Activated CD4-positive, alpha-beta memory T cell treated with anti-CD3 and anti-CD28 coated beads for 36 hours (primary cell): ENCODE measurements at regions of chr1 and their contacts with region 1.

Region 1: DNA sequence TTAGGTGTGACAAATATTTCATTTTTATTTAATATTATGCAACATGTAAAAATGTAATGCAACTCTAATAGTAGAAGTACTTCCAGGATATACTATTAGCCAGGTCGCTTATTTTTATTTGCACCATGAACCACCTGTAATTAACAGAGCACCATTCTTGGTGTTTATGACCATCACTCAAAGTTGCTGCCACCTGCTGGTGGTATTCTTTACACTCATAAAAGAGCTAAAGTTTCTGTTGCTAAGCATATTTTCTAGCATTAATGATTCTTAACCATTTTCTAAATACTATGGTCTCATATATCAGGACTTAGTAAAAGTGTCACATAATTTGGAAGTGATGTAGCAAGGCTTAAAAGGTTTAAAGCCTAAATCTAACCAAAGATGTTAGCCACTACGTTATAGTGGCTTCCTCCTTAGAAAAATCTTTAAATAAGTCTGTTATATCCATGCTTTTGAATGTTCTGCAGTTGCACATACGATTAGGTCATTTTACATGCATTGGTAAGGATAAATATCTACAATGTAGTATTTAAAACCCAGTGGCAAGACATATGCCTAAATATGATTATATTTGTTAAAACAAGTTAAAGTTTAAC is 244.5 kb downstream of the NEGR1 start:
- DNase-seq: no peak
- H3K4me3 Mint-ChIP-seq: no peak overlapping the region
- H3K27ac Mint-ChIP-seq: no peak overlapping the region
- H3K4me1 Mint-ChIP-seq: no peaks in the 10 kb centered on the region
- H3K27me3 Mint-ChIP-seq: no peaks in the 10 kb centered on the region

Region 2: GRCh38 chr1:71093938-71094337 is 943.9 kb before region 1 on chr1:
- CTCF ChIA-PET with region 1: no interaction called
- POLR2A ChIA-PET with region 1: no interaction called
- intact Hi-C with region 1: loop called (anchors 10 kb)
- DNase-seq: no peak
- H3K4me3 Mint-ChIP-seq: no peak overlapping the region
- H3K27ac Mint-ChIP-seq: no peak overlapping the region
- H3K4me1 Mint-ChIP-seq: no peaks in the 10 kb centered on the region
- H3K27me3 Mint-ChIP-seq: peaks cover 1% of the 10 kb centered on the region

Region 3: DNA sequence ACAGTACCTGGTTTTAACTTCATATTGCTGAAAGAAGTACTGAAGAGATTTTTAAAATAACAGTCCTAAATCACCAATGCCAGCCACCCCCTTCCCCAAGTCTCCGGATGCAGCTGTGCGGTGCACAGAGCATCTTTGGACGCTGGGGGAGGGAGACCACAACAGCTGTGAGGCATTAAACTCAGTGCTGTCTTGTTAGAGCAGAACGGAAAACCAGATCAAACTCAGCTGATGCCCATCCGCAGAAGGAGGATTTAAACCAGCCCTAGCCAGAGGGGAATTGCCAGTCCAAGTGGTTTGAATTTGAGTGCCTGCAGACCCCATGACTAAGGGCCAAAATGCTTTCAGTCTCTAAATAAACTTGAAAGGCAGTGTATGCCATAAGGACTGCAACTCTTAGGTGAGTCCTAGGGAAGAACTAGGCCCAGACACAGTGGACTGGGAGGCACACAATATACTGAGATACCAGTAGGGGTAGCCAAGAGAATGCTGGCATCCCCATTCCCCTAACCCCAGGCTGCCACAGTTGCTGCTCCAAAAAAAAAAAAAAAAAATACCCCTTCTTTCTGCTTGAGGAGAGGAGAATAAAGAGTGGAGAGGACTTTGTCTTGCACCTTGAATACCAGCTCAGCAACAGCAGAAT is 331.7 kb before region 1 on chr1:
- CTCF ChIA-PET with region 1: no interaction called
- POLR2A ChIA-PET with region 1: no interaction called
- intact Hi-C with region 1: no loop called
- DNase-seq: no peak
- H3K4me3 Mint-ChIP-seq: no peak overlapping the region
- H3K27ac Mint-ChIP-seq: no peak overlapping the region
- H3K4me1 Mint-ChIP-seq: no peaks in the 10 kb centered on the region
- H3K27me3 Mint-ChIP-seq: no peaks in the 10 kb centered on the region